ENCODE measurements at regions of chr12 and their contacts with region 1.

Region 1: DNA sequence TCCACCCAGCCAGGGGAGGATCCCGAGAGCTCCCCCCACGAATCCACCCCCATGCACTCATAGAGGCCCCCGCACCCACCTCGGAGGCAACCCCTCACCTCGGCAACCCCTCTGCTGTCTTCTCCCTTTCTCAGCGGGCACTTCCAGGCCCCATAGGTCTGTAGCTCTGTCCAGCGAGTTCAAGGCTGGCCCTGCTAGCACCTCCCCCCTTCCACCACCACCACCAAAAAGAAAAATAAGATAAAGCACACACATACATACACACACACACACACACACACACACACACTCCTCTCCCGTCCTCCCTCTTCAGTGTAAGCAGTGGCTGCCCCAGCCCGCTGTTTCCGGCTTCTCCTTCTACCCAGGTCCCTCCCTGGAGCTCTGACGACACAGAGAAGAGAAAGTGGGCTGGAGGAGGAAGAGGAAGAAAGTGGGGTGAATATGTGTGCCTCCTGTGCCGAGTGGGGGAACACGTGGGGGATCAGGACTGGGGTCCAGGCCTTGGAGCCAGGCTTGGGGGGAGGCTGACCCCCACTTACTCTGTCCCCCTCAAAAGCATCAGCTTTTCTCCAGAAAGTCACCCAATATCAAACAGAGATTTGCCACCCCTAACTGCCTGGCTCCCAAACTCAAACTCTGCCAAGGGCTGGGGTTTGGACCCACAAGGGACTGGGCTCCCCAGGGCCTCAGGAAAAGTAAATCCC is at the start of gene STAT6:
- DNase-seq: peak; percentile 75 to 89
- ATAC-seq: peak; percentile 73 to 88 (median 82)
- H3K4me3 ChIP-seq: peak within 1 kb of the TSS; percentile 56 to 84 (median 77)
- H3K27ac ChIP-seq: peak within 1 kb of the TSS; percentile 96 to 99 (median 98)
- H3K4me1 ChIP-seq: peaks cover 0 to 47% (median 31%) of the 10 kb centered on the region in 9 donors
- H3K27me3 ChIP-seq: no peaks in the 10 kb centered on the region
- CTCF ChIP-seq: peak in 1 of 9 donors; percentile 27
- total RNA-seq, gene STAT6: 23.3 to 72.3 (median 38.0) TPM

Region 2: GRCh38 chr12:56630160-56630632 is 481.0 kb before region 1 on chr12 and contains the start of gene BAZ2A:
- intact Hi-C with region 1: no loop called
- DNase-seq: peak; percentile 90 to 92
- ATAC-seq: peak; percentile 88 to 92 (median 89)
- H3K4me3 ChIP-seq: peak within 1 kb of the TSS; percentile 65 to 100 (median 99)
- H3K27ac ChIP-seq: peak within 1 kb of the TSS; percentile 81 to 100 (median 96)
- H3K4me1 ChIP-seq: peaks cover 29 to 74% (median 72%) of the 10 kb centered on the region in 9 donors
- H3K27me3 ChIP-seq: no peaks in the 10 kb centered on the region
- CTCF ChIP-seq: no peak
- total RNA-seq, gene BAZ2A: 28.7 to 58.7 (median 42.6) TPM

Region 3: DNA sequence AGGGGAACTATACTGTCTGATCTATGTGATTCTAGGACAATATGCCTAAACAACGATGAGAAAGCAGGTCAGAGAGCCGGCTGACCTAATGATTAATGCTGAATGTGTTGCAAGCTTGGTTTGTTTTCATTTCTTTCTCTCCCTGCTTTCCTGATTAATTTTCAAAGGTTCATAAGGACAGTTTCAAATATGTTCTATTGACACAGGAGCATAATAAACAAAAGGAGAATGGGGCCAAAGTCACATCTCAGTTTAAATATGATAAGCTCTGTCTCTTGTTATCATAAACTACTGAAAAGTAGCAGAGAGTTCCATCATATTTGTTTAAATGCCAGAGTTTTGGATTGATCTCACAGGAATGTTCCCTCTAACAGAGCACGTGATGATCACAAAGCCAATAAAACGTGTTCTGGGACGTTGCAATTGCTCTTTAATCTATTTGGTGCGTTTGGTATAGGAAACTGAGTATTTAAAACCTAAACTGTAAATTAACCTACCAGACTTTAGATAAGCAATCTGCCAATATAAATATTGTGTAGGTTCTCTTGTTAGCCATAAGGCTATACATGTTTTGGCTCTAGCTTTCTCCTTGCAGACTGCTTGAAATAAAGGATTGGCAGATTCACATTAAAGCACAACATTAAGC is 351.8 kb before region 1 on chr12:
- intact Hi-C with region 1: loop called in 2 of 10 experiments (anchors 5 kb)
- DNase-seq: no peak
- ATAC-seq: no peak
- H3K4me3 ChIP-seq: no peak overlapping the region
- H3K27ac ChIP-seq: no peak overlapping the region
- H3K4me1 ChIP-seq: no peaks in the 10 kb centered on the region
- H3K27me3 ChIP-seq: no peaks in the 10 kb centered on the region
- CTCF ChIP-seq: no peak

Region 4: DNA sequence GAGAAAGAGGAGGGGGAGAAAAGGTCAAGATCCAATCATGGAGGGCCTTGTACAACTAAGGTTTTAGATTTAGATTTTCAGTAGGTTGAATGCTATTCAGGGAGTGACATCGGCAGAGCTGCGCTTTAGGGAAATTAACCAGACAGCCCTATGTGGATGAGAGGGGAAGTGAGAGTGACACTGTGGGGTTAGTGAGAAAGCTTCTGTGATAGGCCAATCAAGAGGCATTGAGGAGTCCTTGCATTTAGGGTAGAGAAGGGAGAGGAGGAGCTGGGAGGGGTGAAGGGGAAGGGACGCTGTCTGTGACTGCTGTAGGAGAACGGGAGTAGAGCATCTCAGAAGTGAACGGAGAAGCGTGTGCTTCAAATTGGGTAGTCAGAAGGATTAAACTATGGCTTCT is 344.6 kb before region 1 on chr12:
- intact Hi-C with region 1: loop called in 1 of 10 experiments (anchors 5 kb)
- DNase-seq: no peak
- ATAC-seq: peak in 2 of 8 donors; percentile 39 to 74
- H3K4me3 ChIP-seq: no peak overlapping the region
- H3K27ac ChIP-seq: no peak overlapping the region
- H3K4me1 ChIP-seq: no peaks in the 10 kb centered on the region
- H3K27me3 ChIP-seq: no peaks in the 10 kb centered on the region
- CTCF ChIP-seq: no peak

Region 5: GRCh38 chr12:57012600-57013465 is 98.3 kb before region 1 on chr12:
- intact Hi-C with region 1: loop called in 6 of 10 experiments (anchors 1 to 10 kb)
- DNase-seq: no peak
- ATAC-seq: no peak
- H3K4me3 ChIP-seq: no peak overlapping the region
- H3K27ac ChIP-seq: no peak overlapping the region
- H3K4me1 ChIP-seq: peaks cover 0 to 3% (median 0%) of the 10 kb centered on the region in 9 donors
- H3K27me3 ChIP-seq: peaks cover 0 to 44% (median 34%) of the 10 kb centered on the region in 7 donors
- CTCF ChIP-seq: no peak

Region 6: GRCh38 chr12:57069523-57069922 is 41.7 kb before region 1 on chr12:
- intact Hi-C with region 1: loop called (anchors 1 to 2 kb)
- DNase-seq: peak in 1 of 2 donors; percentile 76
- ATAC-seq: peak; percentile 85 to 96 (median 94)
- H3K4me3 ChIP-seq: no peak overlapping the region
- H3K27ac ChIP-seq: peak overlapping the region in 9 of 10 donors; percentile 20 to 65 (median 50)
- H3K4me1 ChIP-seq: peaks cover 0 to 26% (median 6%) of the 10 kb centered on the region in 9 donors
- H3K27me3 ChIP-seq: no peaks in the 10 kb centered on the region
- CTCF ChIP-seq: peak; percentile 76 to 94 (median 86)

Region 7: GRCh38 chr12:57088459-57089248 is 22.5 kb before region 1 on chr12 and contains the start of gene NAB2:
- intact Hi-C with region 1: loop called in 5 of 10 experiments (anchors 1 to 2 kb)
- DNase-seq: peak; percentile 97
- ATAC-seq: peak; percentile 76 to 89 (median 80)
- H3K4me3 ChIP-seq: peak within 1 kb of the TSS; percentile 65 to 99 (median 88)
- H3K27ac ChIP-seq: peak within 1 kb of the TSS; percentile 91 to 100 (median 99)
- H3K4me1 ChIP-seq: peaks cover 19 to 70% (median 53%) of the 10 kb centered on the region in 9 donors
- H3K27me3 ChIP-seq: no peaks in the 10 kb centered on the region
- CTCF ChIP-seq: no peak
- total RNA-seq, gene NAB2: 9.5 to 16.2 (median 12.0) TPM